ENCODE measurements at regions of chr20 and their contacts with region 1.

Region 1: GRCh38 chr20:62019881-62020492 is 45.7 kb downstream of the TAF4 start:
- DNase-seq: peak; percentile 67

Region 2: DNA sequence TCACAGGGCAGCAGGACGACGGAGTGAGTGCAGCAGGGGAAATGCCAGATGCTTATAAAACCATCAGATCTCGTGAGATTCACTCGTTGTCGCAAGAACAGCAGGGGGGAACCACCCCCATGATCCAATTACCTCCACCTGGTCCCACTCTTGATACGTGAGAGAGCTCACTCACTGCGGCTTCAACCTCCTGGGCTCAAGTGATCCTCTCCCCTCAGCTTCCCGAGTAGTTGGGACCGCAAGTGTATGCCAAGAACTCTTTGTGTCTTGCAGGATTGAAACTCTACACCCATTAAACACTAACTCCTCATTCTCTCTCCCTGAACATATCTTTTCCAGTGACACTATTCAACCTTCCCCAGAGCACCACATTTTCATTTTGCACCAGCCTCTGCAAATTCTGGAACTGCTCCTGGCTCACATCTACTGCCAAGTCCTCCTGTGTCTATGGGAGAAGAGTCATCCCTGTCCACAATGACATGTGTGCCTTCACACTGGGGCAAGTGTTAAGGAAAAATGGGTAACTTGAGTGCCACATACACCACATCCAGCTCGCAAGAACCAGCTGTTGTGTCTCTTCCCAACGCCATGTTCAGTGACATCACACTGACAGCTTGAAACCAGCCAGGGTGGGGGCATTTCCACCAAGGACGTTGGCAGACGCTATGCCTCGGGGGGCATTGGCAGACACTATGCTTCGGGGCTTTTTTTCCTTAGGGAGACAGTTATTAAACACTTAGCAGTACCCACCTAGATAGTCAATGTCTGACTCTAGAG is 60.5 kb after region 1 on chr20:
- intact Hi-C with region 1: loop called in 1 of 2 experiments (anchors 2 kb)
- DNase-seq: no peak

Region 3: GRCh38 chr20:62143118-62143973 is 123.4 kb after region 1 on chr20 and contains the starts of genes PSMA7 and SS18L1:
- intact Hi-C with region 1: loop called in 1 of 2 experiments (anchors 5 kb)
- DNase-seq: peak; percentile 96
- total RNA-seq, gene PSMA7: 179 to 194 TPM
- total RNA-seq, gene SS18L1: 9.7 to 10.3 TPM